ENCODE measurements at regions of chr16 and their contacts with region 1.

Region 1: GRCh38 chr16:70770626-70771552 is 30.1 kb downstream of the VAC14 start:
- DNase-seq: no peak
- ATAC-seq: peak; percentile 97
- H3K4me3 ChIP-seq: no peak overlapping the region
- H3K27ac ChIP-seq: no peak overlapping the region
- H3K4me1 ChIP-seq: no peaks in the 10 kb centered on the region
- H3K27me3 ChIP-seq: no peaks in the 10 kb centered on the region
- CTCF ChIP-seq: peak; percentile 77 to 97 (median 91)
- EP300 ChIP-seq: no peak
- POLR2A ChIP-seq: no peak
- RAD21 ChIP-seq: peak; percentile 78

Region 2: GRCh38 chr16:70589998-70590471 is 180.9 kb before region 1 on chr16:
- CTCF ChIA-PET with region 1: interaction called, 4 read pairs
- POLR2A ChIA-PET with region 1: no interaction called
- RAD21 ChIA-PET with region 1: no interaction called
- SMC1A ChIA-PET with region 1: no interaction called
- in situ Hi-C with region 1: no loop called
- intact Hi-C with region 1: loop called (anchors 10 kb)
- DNase-seq: no peak
- ATAC-seq: no peak
- H3K4me3 ChIP-seq: no peak overlapping the region
- H3K27ac ChIP-seq: no peak overlapping the region
- H3K4me1 ChIP-seq: no peaks in the 10 kb centered on the region
- H3K27me3 ChIP-seq: peaks cover 0 to 1% of the 10 kb centered on the region in 2 experiments; a peak in 1 of 4 replicates
- CTCF ChIP-seq: no peak
- EP300 ChIP-seq: no peak
- POLR2A ChIP-seq: no peak
- RAD21 ChIP-seq: no peak

Region 3: GRCh38 chr16:70679666-70680494 is 91.0 kb before region 1 on chr16:
- CTCF ChIA-PET with region 1: interaction called, 19 read pairs
- POLR2A ChIA-PET with region 1: no interaction called
- RAD21 ChIA-PET with region 1: no interaction called
- SMC1A ChIA-PET with region 1: interaction called, 3 read pairs
- in situ Hi-C with region 1: no loop called
- intact Hi-C with region 1: loop called (anchors 1 kb)
- DNase-seq: no peak
- ATAC-seq: peak; percentile 44
- H3K4me3 ChIP-seq: no peak overlapping the region
- H3K27ac ChIP-seq: no peak overlapping the region
- H3K4me1 ChIP-seq: no peaks in the 10 kb centered on the region
- H3K27me3 ChIP-seq: no peaks in the 10 kb centered on the region
- CTCF ChIP-seq: peak in 2 of 3 experiments; percentile 23 to 41; a peak in 2 of 6 replicates
- EP300 ChIP-seq: no peak
- POLR2A ChIP-seq: no peak
- RAD21 ChIP-seq: no peak

Region 4: GRCh38 chr16:70750893-70751475 is 19.9 kb before region 1 on chr16:
- CTCF ChIA-PET with region 1: interaction called, 12 read pairs
- POLR2A ChIA-PET with region 1: no interaction called
- RAD21 ChIA-PET with region 1: no interaction called
- SMC1A ChIA-PET with region 1: no interaction called
- in situ Hi-C with region 1: no loop called
- intact Hi-C with region 1: no loop called
- DNase-seq: no peak
- ATAC-seq: no peak
- H3K4me3 ChIP-seq: no peak overlapping the region
- H3K27ac ChIP-seq: no peak overlapping the region
- H3K4me1 ChIP-seq: peaks cover 4% of the 10 kb centered on the region; the same call in 1 of the 2 replicates
- H3K27me3 ChIP-seq: no peaks in the 10 kb centered on the region
- CTCF ChIP-seq: no peak
- EP300 ChIP-seq: no peak
- POLR2A ChIP-seq: no peak
- RAD21 ChIP-seq: no peak

Region 5: DNA sequence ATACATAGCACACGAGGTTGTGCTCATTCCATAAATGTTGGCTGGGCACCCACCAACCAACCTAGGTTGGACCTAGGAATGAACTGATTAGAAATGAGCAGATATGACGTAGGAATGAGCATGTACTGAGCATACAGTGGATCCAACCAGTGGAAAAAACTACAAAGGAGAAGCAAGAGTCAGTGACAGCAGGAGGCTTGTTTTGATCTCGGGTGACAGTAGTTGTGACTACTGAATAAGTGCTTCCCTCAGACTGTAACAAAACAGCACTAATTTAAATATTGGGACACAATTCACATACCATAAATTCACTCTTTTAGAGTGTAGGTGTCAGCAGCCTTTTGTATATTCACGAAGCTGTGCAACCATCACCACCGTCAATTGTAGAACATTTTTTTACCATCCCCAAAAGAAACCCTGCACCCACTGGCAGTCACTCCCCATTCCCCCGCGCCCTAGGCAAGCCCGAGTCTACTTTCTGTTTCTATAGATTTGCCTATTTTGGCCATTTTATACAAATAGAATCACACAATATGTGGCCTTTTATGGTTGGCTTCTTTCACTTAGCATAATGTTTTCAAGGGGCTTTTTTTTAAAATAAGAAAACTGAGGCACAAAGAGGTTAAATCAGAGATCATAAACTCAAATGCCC is 23.1 kb after region 1 on chr16:
- CTCF ChIA-PET with region 1: interaction called, 7 read pairs
- POLR2A ChIA-PET with region 1: no interaction called
- RAD21 ChIA-PET with region 1: interaction called, 4 read pairs
- SMC1A ChIA-PET with region 1: interaction called, 3 read pairs
- in situ Hi-C with region 1: no loop called
- intact Hi-C with region 1: loop called (anchors 1 kb)
- DNase-seq: no peak
- ATAC-seq: peak; percentile 74
- H3K4me3 ChIP-seq: peak overlapping the region; percentile 41
- H3K27ac ChIP-seq: peak overlapping the region; percentile 59
- H3K4me1 ChIP-seq: peaks cover 39% of the 10 kb centered on the region
- H3K27me3 ChIP-seq: no peaks in the 10 kb centered on the region
- CTCF ChIP-seq: no peak
- EP300 ChIP-seq: no peak
- POLR2A ChIP-seq: no peak
- RAD21 ChIP-seq: no peak

Measured in GM12878 (cell line).